ENCODE measurements at regions of chr4 and their contacts with region 1.

Region 1: DNA sequence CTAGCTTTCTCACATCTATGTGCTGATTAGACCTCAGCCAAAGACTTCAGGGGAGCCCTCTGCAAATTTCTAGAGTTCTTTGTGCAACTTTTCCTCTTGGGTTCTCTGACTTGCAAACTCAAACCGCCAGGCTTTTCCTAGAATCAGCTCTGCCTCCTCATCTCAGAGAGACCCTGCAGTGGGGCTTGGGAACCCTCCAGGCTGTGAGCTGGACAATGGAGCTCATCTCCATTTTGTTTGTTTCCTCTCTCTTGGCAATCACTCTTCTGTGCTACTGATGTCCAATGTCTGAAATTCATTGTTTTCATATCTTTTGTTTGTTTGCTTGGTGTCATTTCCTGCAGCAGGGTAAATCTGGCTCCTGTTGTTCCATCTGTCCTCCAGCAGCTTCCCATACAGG is 33.0 kb downstream of the GYPB start:
- DNase-seq: no peak
- H3K4me3 ChIP-seq: no peak overlapping the region
- H3K27ac ChIP-seq: no peak overlapping the region
- H3K4me1 ChIP-seq: no peaks in the 10 kb centered on the region
- H3K27me3 ChIP-seq: no peaks in the 10 kb centered on the region
- CTCF ChIP-seq: no peak
- EP300 ChIP-seq: no peak
- POLR2A ChIP-seq: no peak

Region 2: DNA sequence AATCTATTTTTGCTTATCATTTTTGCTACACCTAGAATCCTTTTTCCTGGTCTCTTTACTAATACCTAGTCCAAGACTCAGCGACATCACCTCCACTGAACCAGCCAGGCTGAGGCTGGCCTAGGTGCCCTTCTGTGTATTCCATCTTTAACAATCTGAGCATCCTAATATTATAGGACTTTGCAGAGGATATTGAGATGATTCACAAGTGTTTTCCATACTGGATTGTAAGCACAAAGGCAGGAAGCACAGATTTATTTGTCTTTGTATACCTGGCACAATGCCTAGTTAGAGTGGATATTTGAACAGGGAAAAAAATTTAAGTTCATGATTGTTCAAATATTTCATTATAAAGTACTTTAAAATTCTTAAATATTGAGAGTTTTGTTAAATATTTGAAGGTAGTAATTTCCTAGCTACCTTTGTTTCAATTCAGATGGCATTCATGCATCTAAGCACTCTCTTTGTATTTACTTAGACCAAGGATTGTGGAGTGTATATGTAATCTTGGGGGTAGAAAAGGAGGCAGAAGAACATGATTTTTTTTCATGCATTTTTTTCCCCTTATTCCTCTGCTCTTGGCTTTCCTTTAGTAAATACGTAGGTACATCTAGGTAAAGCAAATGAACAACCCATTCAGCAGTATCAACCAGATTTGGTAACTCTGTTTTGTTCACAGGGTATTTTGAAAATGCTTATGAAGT is 454.2 kb before region 1 on chr4:
- in situ Hi-C with region 1: no loop called
- intact Hi-C with region 1: no loop called
- DNase-seq: no peak
- H3K4me3 ChIP-seq: no peak overlapping the region
- H3K27ac ChIP-seq: no peak overlapping the region
- H3K4me1 ChIP-seq: peaks cover 0 to 5% (median 0%) of the 10 kb centered on the region in 4 donors
- H3K27me3 ChIP-seq: no peaks in the 10 kb centered on the region
- CTCF ChIP-seq: no peak
- EP300 ChIP-seq: no peak
- POLR2A ChIP-seq: no peak

Region 3: DNA sequence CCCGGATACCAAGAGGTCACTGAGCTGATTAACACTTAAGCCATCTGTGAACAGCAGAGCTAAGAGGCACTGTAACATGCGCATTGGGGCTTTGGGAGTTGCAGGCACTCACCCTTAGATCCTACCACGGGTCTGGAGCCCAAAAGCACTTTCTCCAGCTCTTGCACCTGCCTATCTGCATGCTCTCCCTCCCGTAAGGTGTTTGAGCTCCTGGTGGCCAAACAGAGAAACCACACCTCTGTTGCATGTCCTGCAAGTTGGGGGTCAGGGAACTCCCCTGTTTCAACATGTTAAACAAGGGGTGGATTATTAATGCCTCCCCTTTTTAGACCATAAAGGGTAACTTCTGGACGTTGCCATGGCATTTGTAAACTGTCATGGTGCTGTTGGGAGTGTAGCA is 104.6 kb after region 1 on chr4:
- in situ Hi-C with region 1: loop called in 1 of 4 experiments (anchors 10 kb)
- intact Hi-C with region 1: no loop called
- DNase-seq: no peak
- H3K4me3 ChIP-seq: no peak overlapping the region
- H3K27ac ChIP-seq: no peak overlapping the region
- H3K4me1 ChIP-seq: no peaks in the 10 kb centered on the region
- H3K27me3 ChIP-seq: no peaks in the 10 kb centered on the region
- CTCF ChIP-seq: no peak
- EP300 ChIP-seq: no peak
- POLR2A ChIP-seq: no peak

Region 4: GRCh38 chr4:144154044-144154443 is 167.9 kb after region 1 on chr4:
- in situ Hi-C with region 1: no loop called
- intact Hi-C with region 1: no loop called
- DNase-seq: no peak
- H3K4me3 ChIP-seq: no peak overlapping the region
- H3K27ac ChIP-seq: no peak overlapping the region
- H3K4me1 ChIP-seq: no peaks in the 10 kb centered on the region
- H3K27me3 ChIP-seq: no peaks in the 10 kb centered on the region
- CTCF ChIP-seq: no peak
- EP300 ChIP-seq: no peak
- POLR2A ChIP-seq: no peak

Measured in transverse colon (tissue), 4 donors.